Vagina (tissue), 2 donors: ENCODE measurements at regions of chr3 and their contacts with region 1.

Region 1: GRCh38 chr3:58299839-58300516 is 6.1 kb upstream of the RPP14 start:
- DNase-seq: no peak
- H3K4me3 ChIP-seq: no peak overlapping the region
- H3K27ac ChIP-seq: no peak overlapping the region
- H3K4me1 ChIP-seq: no peaks in the 10 kb centered on the region
- H3K27me3 ChIP-seq: no peaks in the 10 kb centered on the region
- CTCF ChIP-seq: peak in 2 of 3 experiments; percentile 32 to 69
- POLR2A ChIP-seq: no peak

Region 2: GRCh38 chr3:58188173-58188564 is 111.8 kb before region 1 on chr3:
- intact Hi-C with region 1: loop called (anchors 5 kb)
- DNase-seq: no peak
- H3K4me3 ChIP-seq: no peak overlapping the region
- H3K27ac ChIP-seq: peak overlapping the region; percentile 55
- H3K4me1 ChIP-seq: peaks cover 8% of the 10 kb centered on the region
- H3K27me3 ChIP-seq: no peaks in the 10 kb centered on the region
- CTCF ChIP-seq: no peak
- POLR2A ChIP-seq: no peak

Region 3: GRCh38 chr3:58200846-58201355 is 99.1 kb before region 1 on chr3:
- intact Hi-C with region 1: no loop called
- DNase-seq: no peak
- H3K4me3 ChIP-seq: no peak overlapping the region
- H3K27ac ChIP-seq: peak overlapping the region; percentile 29
- H3K4me1 ChIP-seq: peaks cover 30% of the 10 kb centered on the region
- H3K27me3 ChIP-seq: no peaks in the 10 kb centered on the region
- CTCF ChIP-seq: no peak
- POLR2A ChIP-seq: no peak

Region 4: DNA sequence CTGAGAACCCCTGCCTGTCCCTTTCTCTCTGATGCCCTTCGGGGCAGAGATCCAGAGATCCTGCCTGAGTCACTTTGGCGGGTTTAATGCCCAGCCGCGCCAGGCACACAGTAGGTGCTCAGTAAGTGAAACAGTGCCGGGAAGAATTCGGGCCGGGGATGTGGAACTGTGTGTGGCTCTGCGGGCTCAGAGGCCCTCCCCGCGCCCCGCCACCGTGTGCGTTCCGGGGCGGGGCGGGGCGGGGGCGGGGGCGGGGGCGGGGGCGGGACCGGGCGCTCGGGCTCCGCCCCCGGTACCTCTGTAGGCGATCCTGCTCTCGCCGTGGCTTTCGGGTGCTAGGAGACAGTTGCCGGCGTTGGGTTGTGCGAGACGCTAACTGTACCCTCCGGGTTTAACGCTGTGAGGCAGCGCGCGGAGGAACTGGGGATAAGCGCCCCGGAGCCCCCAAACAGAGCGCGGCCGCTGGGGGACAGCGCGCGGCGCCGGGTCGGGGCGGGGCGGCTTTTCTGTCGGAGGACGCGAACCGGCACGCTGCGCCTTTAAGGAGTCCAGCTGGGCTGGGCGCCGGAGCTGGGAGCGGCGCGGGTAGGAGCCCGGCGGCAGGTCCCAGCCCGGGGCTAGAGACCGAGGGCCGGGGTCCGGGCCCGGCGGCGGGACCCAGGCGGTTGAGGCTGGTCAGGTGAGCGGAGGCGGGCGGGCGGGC is 62.6 kb before region 1 on chr3 and contains the start of gene ABHD6:
- intact Hi-C with region 1: loop called (anchors 5 kb)
- DNase-seq: no peak
- H3K4me3 ChIP-seq: peak within 1 kb of the TSS; percentile 92 to 93
- H3K27ac ChIP-seq: peak within 1 kb of the TSS; percentile 82
- H3K4me1 ChIP-seq: peaks cover 33% of the 10 kb centered on the region
- H3K27me3 ChIP-seq: no peaks in the 10 kb centered on the region
- CTCF ChIP-seq: peak in 1 of 3 experiments; percentile 77
- POLR2A ChIP-seq: peak in 1 of 2 donors; percentile 9
- total RNA-seq, gene ABHD6: 18.9 TPM

Region 5: GRCh38 chr3:59245859-59246501 is 946.0 kb after region 1 on chr3:
- intact Hi-C with region 1: no loop called
- DNase-seq: no peak
- H3K4me3 ChIP-seq: no peak overlapping the region
- H3K27ac ChIP-seq: no peak overlapping the region
- H3K4me1 ChIP-seq: no peaks in the 10 kb centered on the region
- H3K27me3 ChIP-seq: no peaks in the 10 kb centered on the region
- CTCF ChIP-seq: no peak
- POLR2A ChIP-seq: no peak